Left colon (tissue), 2 donors: ENCODE measurements at regions of chr12 and their contacts with region 1.

Region 1: GRCh38 chr12:47949441-47950308 is 13.7 kb upstream of the TMEM106C start:
- DNase-seq: peak; percentile 81 to 89
- ATAC-seq: peak; percentile 77

Region 2: GRCh38 chr12:47478426-47478825 is 471.2 kb before region 1 on chr12:
- intact Hi-C with region 1: no loop called
- DNase-seq: no peak
- ATAC-seq: no peak

Region 3: GRCh38 chr12:47844274-47845019 is 105.2 kb before region 1 on chr12:
- intact Hi-C with region 1: loop called in 1 of 2 experiments (anchors 10 kb)
- DNase-seq: no peak
- ATAC-seq: peak; percentile 18

Region 4: GRCh38 chr12:47904713-47905310 is 44.9 kb before region 1 on chr12 and contains the start of gene VDR:
- intact Hi-C with region 1: loop called in 1 of 2 experiments (anchors 10 kb)
- DNase-seq: peak; percentile 86 to 88
- ATAC-seq: peak; percentile 59
- total RNA-seq, gene VDR: 143 to 154 TPM